Sigmoid colon (tissue), 7 donors: ENCODE measurements at regions of chr1 and their contacts with region 1.

Region 1: DNA sequence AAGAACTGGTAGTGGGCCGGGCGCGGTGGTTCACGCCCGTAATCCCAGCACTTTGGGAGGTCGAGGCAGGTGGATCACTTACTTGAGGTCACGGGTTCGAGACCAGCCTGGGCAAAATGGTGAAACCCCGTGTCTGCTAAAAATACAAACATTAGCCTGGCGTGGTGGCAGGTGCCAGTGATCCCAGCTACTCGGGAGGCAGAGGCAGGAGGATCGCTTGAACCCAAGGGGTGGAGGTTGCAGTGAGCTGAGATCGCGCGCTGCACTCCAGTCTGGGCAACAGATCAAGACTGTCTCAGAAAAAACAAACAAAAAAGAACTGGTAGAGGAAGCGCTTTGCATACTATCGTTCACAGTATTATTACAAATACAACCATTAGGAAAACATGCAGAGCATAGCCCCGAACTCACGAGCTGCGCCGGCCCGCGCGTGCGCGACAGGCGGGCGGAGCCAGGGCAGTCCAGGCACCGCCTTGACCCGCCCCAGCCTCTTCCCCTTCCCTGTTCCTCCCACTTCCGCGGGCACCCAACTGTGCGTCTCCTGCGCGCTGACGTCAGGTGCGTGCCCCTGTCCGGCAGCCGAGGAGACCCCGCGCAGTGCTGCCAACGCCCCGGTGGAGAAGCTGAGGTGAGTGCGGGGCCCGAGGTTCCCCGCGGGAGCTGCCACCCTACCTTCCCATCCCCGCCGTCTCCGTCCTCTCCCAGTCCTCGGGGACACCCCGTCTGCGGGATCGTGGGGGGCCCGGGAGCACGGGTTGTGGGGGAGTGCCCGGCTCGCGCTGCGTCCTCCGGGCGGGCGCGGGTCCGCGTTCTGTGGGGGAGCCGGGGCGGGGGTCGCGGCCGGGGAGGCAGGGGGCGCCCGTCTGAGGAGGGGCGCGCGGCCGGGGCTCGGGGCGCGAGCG is at the start of gene CDC42:
- DNase-seq: peak; percentile 99
- H3K4me3 ChIP-seq: peak within 1 kb of the TSS; percentile 90 to 96 (median 96)
- H3K27ac ChIP-seq: peak within 1 kb of the TSS; percentile 95 to 100 (median 100)
- H3K4me1 ChIP-seq: peaks cover 0 to 39% (median 37%) of the 10 kb centered on the region in 4 donors
- H3K27me3 ChIP-seq: no peaks in the 10 kb centered on the region
- CTCF ChIP-seq: no peak
- EP300 ChIP-seq: peak in 1 of 4 donors; percentile 59
- POLR2A ChIP-seq: peak; percentile 97 to 98
- total RNA-seq, gene CDC42: 173 to 253 (median 224) TPM

Region 2: DNA sequence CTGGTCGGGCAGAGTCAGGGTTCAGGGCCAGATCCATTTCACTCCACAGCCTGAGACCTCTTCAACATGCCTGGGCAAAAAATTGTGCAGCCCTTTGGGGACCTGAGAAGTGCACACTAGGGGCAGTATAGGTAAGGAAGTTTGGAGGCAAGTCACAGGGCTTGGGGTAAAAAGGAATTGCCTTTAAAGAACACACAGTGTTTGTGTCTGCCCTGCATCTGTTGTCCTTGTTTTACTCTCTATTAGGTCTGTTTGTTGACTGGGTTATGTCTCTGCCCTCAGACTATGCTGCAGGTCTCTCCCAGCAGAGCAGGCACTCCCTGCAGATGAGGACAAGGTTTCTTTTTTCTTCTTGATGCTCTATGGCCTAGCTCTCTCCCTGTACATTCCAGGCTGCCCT is 218.3 kb before region 1 on chr1:
- intact Hi-C with region 1: no loop called
- DNase-seq: no peak
- H3K4me3 ChIP-seq: no peak overlapping the region
- H3K27ac ChIP-seq: no peak overlapping the region
- H3K4me1 ChIP-seq: no peaks in the 10 kb centered on the region
- H3K27me3 ChIP-seq: no peaks in the 10 kb centered on the region
- CTCF ChIP-seq: no peak
- EP300 ChIP-seq: no peak
- POLR2A ChIP-seq: no peak

Region 3: GRCh38 chr1:22018583-22019559 is 33.5 kb before region 1 on chr1:
- intact Hi-C with region 1: no loop called
- DNase-seq: peak; percentile 71
- H3K4me3 ChIP-seq: no peak overlapping the region
- H3K27ac ChIP-seq: peak overlapping the region in 2 of 4 donors; percentile 21 to 27
- H3K4me1 ChIP-seq: peaks cover 0 to 1% (median under 1%) of the 10 kb centered on the region in 4 donors
- H3K27me3 ChIP-seq: no peaks in the 10 kb centered on the region
- CTCF ChIP-seq: no peak
- EP300 ChIP-seq: no peak
- POLR2A ChIP-seq: no peak

Region 4: GRCh38 chr1:22031214-22031962 is 21.0 kb before region 1 on chr1:
- intact Hi-C with region 1: loop called (anchors 2 kb)
- DNase-seq: peak; percentile 89
- H3K4me3 ChIP-seq: no peak overlapping the region
- H3K27ac ChIP-seq: peak overlapping the region; percentile 18 to 81 (median 68)
- H3K4me1 ChIP-seq: peaks cover 0 to 39% (median 20%) of the 10 kb centered on the region in 4 donors
- H3K27me3 ChIP-seq: no peaks in the 10 kb centered on the region
- CTCF ChIP-seq: no peak
- EP300 ChIP-seq: peak in 2 of 4 donors; percentile 68 to 84
- POLR2A ChIP-seq: no peak